Mammary epithelial cell (primary cell): ENCODE measurements at regions of chr7 and their contacts with region 1.

Region 1: DNA sequence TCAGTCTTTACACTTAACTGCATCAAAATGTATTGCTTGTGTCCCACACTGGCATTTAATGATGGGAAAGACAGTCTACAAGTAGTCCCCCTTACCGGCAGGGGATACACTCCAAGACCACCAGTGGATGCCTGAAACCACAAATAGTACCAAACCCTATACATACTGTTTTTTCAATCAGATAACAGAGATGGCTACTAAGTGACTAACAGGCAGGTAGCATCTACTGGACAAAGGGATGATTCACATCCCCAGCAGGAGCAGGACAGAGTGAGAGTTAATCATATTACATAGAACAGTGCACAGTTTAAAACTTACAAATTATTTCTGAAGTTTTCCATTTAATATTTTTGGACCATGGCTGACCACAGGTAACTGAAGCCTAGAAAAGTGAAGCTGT is 13.2 kb downstream of the TMEM243 start:
- DNase-seq: peak; percentile 57
- H3K4me3 ChIP-seq: no peak overlapping the region
- H3K27ac ChIP-seq: no peak overlapping the region
- H3K4me1 ChIP-seq: peaks cover 7% of the 10 kb centered on the region
- H3K27me3 ChIP-seq: no peaks in the 10 kb centered on the region
- CTCF ChIP-seq: no peak

Region 2: DNA sequence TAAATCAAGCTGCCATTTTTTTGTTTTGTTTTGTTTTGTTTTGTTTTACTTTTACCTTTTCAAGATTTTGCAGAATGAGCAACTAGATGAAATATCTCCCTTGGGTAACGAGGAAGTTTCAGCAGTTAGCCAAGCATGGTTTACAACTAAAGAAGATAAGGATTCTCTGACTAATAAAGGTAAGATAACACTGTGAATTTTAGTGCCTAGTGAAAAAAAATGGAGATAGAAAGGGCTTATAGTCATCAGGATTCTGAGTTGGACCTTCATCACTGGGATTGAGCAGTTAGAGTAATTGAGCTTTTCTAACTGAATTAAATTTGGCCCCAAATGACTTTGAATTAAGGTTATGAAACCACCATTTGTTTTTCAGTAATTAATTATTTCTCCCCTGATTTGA is 32.9 kb before region 1 on chr7:
- CTCF ChIA-PET with region 1: interaction called, 26 read pairs
- dilution Hi-C with region 1: no loop called
- in situ Hi-C with region 1: no loop called
- intact Hi-C with region 1: no loop called
- DNase-seq: no peak
- H3K4me3 ChIP-seq: no peak overlapping the region
- H3K27ac ChIP-seq: no peak overlapping the region
- H3K4me1 ChIP-seq: no peaks in the 10 kb centered on the region
- H3K27me3 ChIP-seq: no peaks in the 10 kb centered on the region
- CTCF ChIP-seq: no peak

Region 3: GRCh38 chr7:87426160-87426559 is 219.8 kb after region 1 on chr7:
- CTCF ChIA-PET with region 1: no interaction called
- dilution Hi-C with region 1: no loop called
- in situ Hi-C with region 1: no loop called
- intact Hi-C with region 1: no loop called
- DNase-seq: no peak
- H3K4me3 ChIP-seq: no peak overlapping the region
- H3K27ac ChIP-seq: no peak overlapping the region
- H3K4me1 ChIP-seq: no peaks in the 10 kb centered on the region
- H3K27me3 ChIP-seq: no peaks in the 10 kb centered on the region
- CTCF ChIP-seq: no peak